ENCODE measurements at regions of chr11 and their contacts with region 1.

Region 1: GRCh38 chr11:126090452-126090851 is 27.8 kb upstream of the CDON start:
- DNase-seq: no peak
- ATAC-seq: no peak
- H3K4me3 ChIP-seq: no peak overlapping the region
- H3K27ac ChIP-seq: no peak overlapping the region
- H3K4me1 ChIP-seq: peaks cover 11% of the 10 kb centered on the region
- H3K27me3 ChIP-seq: no peaks in the 10 kb centered on the region
- CTCF ChIP-seq: no peak

Region 2: GRCh38 chr11:125874556-125875124 is 215.8 kb before region 1 on chr11:
- CTCF ChIA-PET with region 1: no interaction called
- POLR2A ChIA-PET with region 1: no interaction called
- intact Hi-C with region 1: no loop called
- DNase-seq: peak; percentile 90
- ATAC-seq: peak; percentile 99
- H3K4me3 ChIP-seq: peak overlapping the region; percentile 51
- H3K27ac ChIP-seq: no peak overlapping the region
- H3K4me1 ChIP-seq: 0 out of 2 replicates have a peak, but pooled peaks cover 3% of the 10 kb centered on the region
- H3K27me3 ChIP-seq: no peaks in the 10 kb centered on the region
- CTCF ChIP-seq: peak; percentile 94

Region 3: DNA sequence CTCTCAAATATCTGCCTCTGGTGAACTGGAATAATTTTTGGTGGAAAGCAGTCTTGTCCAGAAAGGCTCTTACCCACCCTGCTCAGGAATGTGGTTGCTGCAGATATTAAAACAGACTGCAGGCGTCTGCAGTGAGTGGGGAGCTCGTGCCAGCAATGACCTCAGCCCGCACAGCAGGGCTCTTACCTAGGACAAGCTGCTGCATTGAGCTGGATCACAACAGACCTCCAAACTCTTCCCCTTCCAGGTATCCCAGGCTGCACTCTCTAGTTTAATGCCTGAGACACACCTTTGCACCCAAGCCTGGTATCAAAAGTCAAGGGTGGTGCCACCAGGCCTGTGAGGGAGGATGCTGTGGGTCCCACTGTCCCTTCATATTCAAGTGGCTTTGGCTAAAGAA is 41.9 kb after region 1 on chr11:
- CTCF ChIA-PET with region 1: interaction called, 4 read pairs
- POLR2A ChIA-PET with region 1: no interaction called
- intact Hi-C with region 1: loop called (anchors 5 kb)
- DNase-seq: peak; percentile 84
- ATAC-seq: peak; percentile 98
- H3K4me3 ChIP-seq: no peak overlapping the region
- H3K27ac ChIP-seq: no peak overlapping the region
- H3K4me1 ChIP-seq: peaks cover 11% of the 10 kb centered on the region
- H3K27me3 ChIP-seq: peaks cover 3% of the 10 kb centered on the region; the same call in 1 of the 2 replicates
- CTCF ChIP-seq: no peak